HepG2 (cell line): ENCODE measurements at regions of chr2 and their contacts with region 1.

Region 1: GRCh38 chr2:17282245-17282644 is 236.0 kb downstream of the RAD51AP2 start:
- DNase-seq: no peak
- ATAC-seq: no peak
- H3K4me3 ChIP-seq: no peak overlapping the region
- H3K27ac ChIP-seq: no peak overlapping the region
- H3K4me1 ChIP-seq: no peaks in the 10 kb centered on the region
- H3K27me3 ChIP-seq: no peaks in the 10 kb centered on the region
- CTCF ChIP-seq: no peak
- EP300 ChIP-seq: no peak
- POLR2A ChIP-seq: no peak
- RAD21 ChIP-seq: no peak

Region 2: GRCh38 chr2:17254441-17254840 is 27.8 kb before region 1 on chr2:
- CTCF ChIA-PET with region 1: no interaction called
- POLR2A ChIA-PET with region 1: no interaction called
- in situ Hi-C with region 1: no loop called
- intact Hi-C with region 1: loop called (anchors 1 kb)
- DNase-seq: no peak
- ATAC-seq: no peak
- H3K4me3 ChIP-seq: no peak overlapping the region
- H3K27ac ChIP-seq: no peak overlapping the region
- H3K4me1 ChIP-seq: no peaks in the 10 kb centered on the region
- H3K27me3 ChIP-seq: peaks cover 0 to 5% of the 10 kb centered on the region in 2 experiments; a peak in 1 of 5 replicates
- CTCF ChIP-seq: no peak
- EP300 ChIP-seq: no peak
- POLR2A ChIP-seq: no peak
- RAD21 ChIP-seq: no peak